ENCODE measurements at regions of chr17 and their contacts with region 1.

Region 1: GRCh38 chr17:55037828-55038227 is 69.3 kb downstream of the STXBP4 start:
- DNase-seq: no peak
- H3K4me3 ChIP-seq: no peak overlapping the region
- H3K27ac ChIP-seq: no peak overlapping the region
- H3K4me1 ChIP-seq: no peaks in the 10 kb centered on the region
- H3K27me3 ChIP-seq: no peaks in the 10 kb centered on the region
- CTCF ChIP-seq: no peak
- POLR2A ChIP-seq: no peak

Region 2: GRCh38 chr17:55023626-55024025 is 14.2 kb before region 1 on chr17:
- intact Hi-C with region 1: loop called (anchors 2 kb)
- DNase-seq: no peak
- H3K4me3 ChIP-seq: no peak overlapping the region
- H3K27ac ChIP-seq: no peak overlapping the region
- H3K4me1 ChIP-seq: no peaks in the 10 kb centered on the region
- H3K27me3 ChIP-seq: no peaks in the 10 kb centered on the region
- CTCF ChIP-seq: no peak
- POLR2A ChIP-seq: no peak

Region 3: DNA sequence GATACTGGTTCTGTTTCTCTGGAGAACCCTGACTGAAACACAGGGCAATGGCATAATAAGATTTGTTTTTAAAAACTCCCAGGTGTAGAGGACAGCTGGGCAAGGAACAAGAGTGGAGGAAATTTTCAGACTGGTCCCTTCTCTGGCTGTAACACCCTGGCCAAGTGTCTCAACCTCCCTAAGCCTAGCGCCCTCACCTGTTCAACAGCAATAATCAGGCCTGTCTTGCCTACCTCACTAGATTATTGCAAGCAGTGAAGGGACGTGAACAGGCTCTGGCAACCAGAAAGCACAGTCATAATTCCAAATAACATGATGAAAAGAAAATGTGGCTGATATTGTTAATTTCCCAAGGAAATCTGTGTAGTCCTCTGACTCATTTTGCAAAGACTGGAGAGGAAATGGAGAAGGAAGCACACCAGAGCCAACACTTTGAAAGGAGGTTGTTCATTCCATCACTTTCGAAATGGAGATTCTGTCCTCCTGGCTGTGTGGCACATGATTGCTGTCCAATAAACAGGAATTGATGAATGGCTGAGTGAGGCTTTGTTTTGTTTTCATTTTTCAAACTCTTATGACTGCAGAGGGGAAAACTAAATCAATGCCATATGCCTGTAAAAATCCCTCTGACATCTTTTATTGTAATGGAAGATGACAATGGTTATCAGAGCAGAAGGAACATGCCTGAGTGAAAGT is 139.5 kb after region 1 on chr17:
- intact Hi-C with region 1: no loop called
- DNase-seq: no peak
- H3K4me3 ChIP-seq: no peak overlapping the region
- H3K27ac ChIP-seq: no peak overlapping the region
- H3K4me1 ChIP-seq: no peaks in the 10 kb centered on the region
- H3K27me3 ChIP-seq: no peaks in the 10 kb centered on the region
- CTCF ChIP-seq: no peak
- POLR2A ChIP-seq: no peak

Measured in vagina (tissue), 2 donors.